ENCODE measurements at regions of chr3 and their contacts with region 1.

Region 1: GRCh38 chr3:194296454-194297263 is 54.5 kb downstream of the CPN2 start:
- DNase-seq: peak; percentile 82 to 86
- H3K4me3 ChIP-seq: peak overlapping the region; percentile 54
- H3K4me3 Mint-ChIP-seq: peak overlapping the region; percentile 71
- H3K27ac Mint-ChIP-seq: peak overlapping the region; percentile 80
- H3K4me1 ChIP-seq: peaks cover 30% of the 10 kb centered on the region
- H3K4me1 Mint-ChIP-seq: peaks cover 13% of the 10 kb centered on the region
- H3K27me3 ChIP-seq: no peaks in the 10 kb centered on the region
- H3K27me3 Mint-ChIP-seq: no peaks in the 10 kb centered on the region
- CTCF ChIP-seq: no peak

Region 2: GRCh38 chr3:194112120-194113106 is 184.2 kb before region 1 on chr3:
- CTCF ChIA-PET with region 1: no interaction called
- POLR2A ChIA-PET with region 1: no interaction called
- intact Hi-C with region 1: no loop called
- DNase-seq: peak; percentile 90 to 93
- H3K4me3 ChIP-seq: peak overlapping the region; percentile 25
- H3K4me3 Mint-ChIP-seq: peak overlapping the region; percentile 74
- H3K27ac Mint-ChIP-seq: peak overlapping the region; percentile 93
- H3K4me1 ChIP-seq: peaks cover 46% of the 10 kb centered on the region
- H3K4me1 Mint-ChIP-seq: peaks cover 35% of the 10 kb centered on the region
- H3K27me3 ChIP-seq: no peaks in the 10 kb centered on the region
- H3K27me3 Mint-ChIP-seq: no peaks in the 10 kb centered on the region
- CTCF ChIP-seq: no peak

Region 3: GRCh38 chr3:194204042-194204987 is 92.3 kb before region 1 on chr3:
- CTCF ChIA-PET with region 1: no interaction called
- POLR2A ChIA-PET with region 1: no interaction called
- intact Hi-C with region 1: loop called (anchors 5 kb)
- DNase-seq: peak in 1 of 2 experiments; percentile 45
- H3K4me3 ChIP-seq: peak overlapping the region; percentile 54
- H3K4me3 Mint-ChIP-seq: peak overlapping the region; percentile 92
- H3K27ac Mint-ChIP-seq: no peak overlapping the region
- H3K4me1 ChIP-seq: peaks cover 15% of the 10 kb centered on the region; the same call in 1 of the 2 replicates
- H3K4me1 Mint-ChIP-seq: peaks cover 5% of the 10 kb centered on the region
- H3K27me3 ChIP-seq: no peaks in the 10 kb centered on the region
- H3K27me3 Mint-ChIP-seq: no peaks in the 10 kb centered on the region
- CTCF ChIP-seq: no peak

Region 4: DNA sequence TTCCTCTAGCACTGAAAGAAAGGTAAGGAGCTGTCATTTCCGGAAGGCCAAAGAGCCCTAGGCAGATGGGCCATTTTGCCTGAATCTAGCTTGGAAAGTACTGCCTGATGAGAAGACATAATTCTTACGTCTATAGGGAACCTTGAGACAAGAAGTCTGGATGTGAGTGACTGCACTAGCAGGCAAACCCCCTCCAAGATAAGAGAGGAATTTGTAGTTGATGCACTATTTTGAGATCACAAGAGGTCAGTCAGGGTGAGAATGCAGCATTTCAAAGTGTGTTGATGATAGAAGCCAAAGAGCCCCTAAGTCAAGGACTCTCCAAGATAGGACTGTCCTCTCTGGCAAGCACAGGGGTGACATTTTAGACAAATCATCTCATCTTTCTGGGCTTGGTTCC is 61.5 kb before region 1 on chr3:
- CTCF ChIA-PET with region 1: no interaction called
- POLR2A ChIA-PET with region 1: no interaction called
- intact Hi-C with region 1: loop called (anchors 2 kb)
- DNase-seq: peak in 1 of 2 experiments; percentile 29
- H3K4me3 ChIP-seq: no peak overlapping the region
- H3K4me3 Mint-ChIP-seq: no peak overlapping the region
- H3K27ac Mint-ChIP-seq: peak overlapping the region; percentile 14
- H3K4me1 ChIP-seq: peaks cover 16% of the 10 kb centered on the region
- H3K4me1 Mint-ChIP-seq: peaks cover 23% of the 10 kb centered on the region
- H3K27me3 ChIP-seq: no peaks in the 10 kb centered on the region
- H3K27me3 Mint-ChIP-seq: no peaks in the 10 kb centered on the region
- CTCF ChIP-seq: no peak

Region 5: GRCh38 chr3:194315088-194315964 is 18.7 kb after region 1 on chr3:
- CTCF ChIA-PET with region 1: interaction called, 12 read pairs
- POLR2A ChIA-PET with region 1: interaction called, 7 read pairs
- intact Hi-C with region 1: loop called (anchors 1 kb)
- DNase-seq: peak; percentile 92 to 95
- H3K4me3 ChIP-seq: peak overlapping the region; percentile 51
- H3K4me3 Mint-ChIP-seq: peak overlapping the region; percentile 85
- H3K27ac Mint-ChIP-seq: peak overlapping the region; percentile 93
- H3K4me1 ChIP-seq: peaks cover 41% of the 10 kb centered on the region
- H3K4me1 Mint-ChIP-seq: peaks cover 49% of the 10 kb centered on the region
- H3K27me3 ChIP-seq: no peaks in the 10 kb centered on the region
- H3K27me3 Mint-ChIP-seq: no peaks in the 10 kb centered on the region
- CTCF ChIP-seq: peak; percentile 87 to 95

Region 6: GRCh38 chr3:194447161-194447560 is 150.5 kb after region 1 on chr3:
- CTCF ChIA-PET with region 1: no interaction called
- POLR2A ChIA-PET with region 1: no interaction called
- intact Hi-C with region 1: no loop called
- DNase-seq: peak; percentile 59 to 61
- H3K4me3 ChIP-seq: no peak overlapping the region
- H3K4me3 Mint-ChIP-seq: peak overlapping the region; percentile 27
- H3K27ac Mint-ChIP-seq: peak overlapping the region; percentile 61
- H3K4me1 ChIP-seq: peaks cover 36% of the 10 kb centered on the region
- H3K4me1 Mint-ChIP-seq: peaks cover 47% of the 10 kb centered on the region
- H3K27me3 ChIP-seq: no peaks in the 10 kb centered on the region
- H3K27me3 Mint-ChIP-seq: no peaks in the 10 kb centered on the region
- CTCF ChIP-seq: no peak